ENCODE measurements at regions of chr18 and their contacts with region 1.

Region 1: DNA sequence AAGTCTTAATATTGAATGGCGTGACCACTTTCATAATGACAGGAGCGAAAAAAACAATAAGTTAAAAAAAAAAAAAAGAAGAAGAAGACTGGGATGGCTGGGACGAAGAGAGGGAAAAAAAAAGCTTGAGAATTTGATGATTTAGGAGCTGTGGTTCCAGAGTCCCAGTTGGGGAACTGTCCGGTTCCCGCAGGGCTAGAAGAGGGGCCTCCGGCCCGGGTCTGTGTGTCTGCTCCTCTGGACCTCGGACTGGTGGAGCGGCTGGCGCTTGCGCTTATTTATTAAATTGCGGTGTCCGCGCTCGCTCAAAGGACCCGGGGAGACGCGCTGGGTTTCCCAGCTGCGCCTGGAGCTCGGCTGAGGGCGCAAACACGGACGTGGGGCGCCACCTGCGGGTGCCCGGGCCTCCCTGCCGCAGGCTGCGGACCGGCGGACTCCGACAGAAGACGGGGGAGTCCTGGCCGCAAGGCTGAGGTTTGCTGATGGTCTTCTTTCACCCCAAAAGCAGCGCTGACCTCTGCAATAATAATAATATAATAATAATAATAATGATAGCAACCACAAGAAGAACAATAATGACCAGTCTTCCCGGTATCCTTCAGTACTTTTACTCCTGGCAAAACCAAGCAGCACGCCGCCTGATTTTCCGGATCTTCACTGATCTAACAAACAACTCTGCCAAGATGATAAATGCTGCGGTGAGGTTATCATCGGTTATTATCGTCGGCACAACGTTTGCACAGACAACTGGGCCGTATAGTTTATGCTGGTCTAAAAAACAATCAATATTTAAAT is at the start of gene CBLN2:
- H3K4me3 ChIP-seq: peak within 1 kb of the TSS; percentile 21
- H3K27ac ChIP-seq: no peak within 1 kb of the TSS
- H3K4me1 ChIP-seq: no peaks in the 10 kb centered on the region
- CTCF ChIP-seq: peak; percentile 61

Region 2: DNA sequence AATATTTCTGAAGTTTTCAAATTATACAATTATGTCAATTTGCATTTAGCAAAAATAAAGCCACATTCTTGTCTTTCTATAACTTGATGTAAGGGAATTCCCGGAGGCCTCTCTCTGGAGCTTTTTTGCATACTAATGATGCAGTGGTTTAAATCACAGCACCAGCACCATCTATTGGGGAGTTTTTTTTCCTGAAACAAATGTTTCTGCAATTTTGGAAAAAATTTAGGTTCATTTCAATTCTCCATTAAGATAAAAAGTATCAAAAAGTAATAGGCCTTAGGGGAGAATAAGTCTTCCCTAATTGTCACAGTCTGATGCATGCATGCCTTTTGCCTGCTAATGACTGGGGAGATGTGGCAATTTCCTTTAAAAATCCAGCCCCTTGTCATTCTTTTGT is 13.7 kb before region 1 on chr18:
- CTCF ChIA-PET with region 1: interaction called, 10 read pairs
- POLR2A ChIA-PET with region 1: no interaction called
- H3K4me3 ChIP-seq: no peak overlapping the region
- H3K27ac ChIP-seq: no peak overlapping the region
- H3K4me1 ChIP-seq: no peaks in the 10 kb centered on the region
- CTCF ChIP-seq: no peak